Activated CD4-positive, alpha-beta T cell treated with anti-CD3 and anti-CD28 coated beads, Interleukin-2, amount 10 ng/mL, durations not matched to agents 24 days and 14 days (primary cell): ENCODE measurements at regions of chr14 and their contacts with region 1.

Region 1: DNA sequence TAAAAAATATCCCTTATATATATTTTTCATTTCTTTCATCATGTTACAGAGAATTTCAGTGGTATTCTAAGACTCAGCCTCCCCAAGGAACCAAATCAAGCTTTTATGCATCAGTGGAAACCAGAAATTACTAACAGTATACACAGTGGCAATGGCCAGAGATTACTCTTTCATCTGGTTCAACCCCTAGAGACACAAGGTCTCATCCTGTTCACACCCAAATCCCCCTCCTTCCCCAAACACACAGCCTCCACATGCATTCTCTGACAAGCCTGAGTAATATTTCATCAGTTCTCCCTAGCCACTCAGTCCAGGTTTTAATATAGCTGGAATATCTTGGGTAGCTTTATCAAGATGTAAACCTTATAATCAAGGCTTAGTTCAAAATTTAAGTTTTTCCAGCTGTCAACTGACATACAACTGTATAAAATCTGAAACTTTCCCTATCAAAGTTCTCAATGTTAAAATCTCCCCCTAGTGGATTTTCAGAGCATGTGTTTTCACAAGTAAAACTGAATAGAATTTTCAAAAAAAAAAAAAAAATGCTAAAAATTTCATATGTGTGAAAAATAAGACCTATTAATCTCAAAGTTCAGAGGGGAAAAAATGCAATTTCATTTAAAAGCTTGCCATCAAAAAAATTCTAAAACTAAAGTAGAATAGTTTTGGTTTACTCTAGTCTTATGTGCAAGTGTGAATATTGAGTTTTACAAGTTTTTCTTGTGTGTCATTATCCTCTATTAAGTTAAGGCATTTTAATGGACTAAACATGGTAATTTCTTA is 10.5 kb upstream of the SSTR1 start:
- DNase-seq: no peak
- H3K4me3 Mint-ChIP-seq: no peak overlapping the region
- H3K27ac Mint-ChIP-seq: no peak overlapping the region
- H3K4me1 Mint-ChIP-seq: no peaks in the 10 kb centered on the region
- H3K27me3 Mint-ChIP-seq: no peaks in the 10 kb centered on the region

Region 2: GRCh38 chr14:37903343-37904191 is 293.6 kb before region 1 on chr14:
- intact Hi-C with region 1: loop called (anchors 5 kb)
- DNase-seq: peak; percentile 62
- H3K4me3 Mint-ChIP-seq: no peak overlapping the region
- H3K27ac Mint-ChIP-seq: no peak overlapping the region
- H3K4me1 Mint-ChIP-seq: peaks cover 2% of the 10 kb centered on the region
- H3K27me3 Mint-ChIP-seq: peaks cover 2% of the 10 kb centered on the region

Region 3: DNA sequence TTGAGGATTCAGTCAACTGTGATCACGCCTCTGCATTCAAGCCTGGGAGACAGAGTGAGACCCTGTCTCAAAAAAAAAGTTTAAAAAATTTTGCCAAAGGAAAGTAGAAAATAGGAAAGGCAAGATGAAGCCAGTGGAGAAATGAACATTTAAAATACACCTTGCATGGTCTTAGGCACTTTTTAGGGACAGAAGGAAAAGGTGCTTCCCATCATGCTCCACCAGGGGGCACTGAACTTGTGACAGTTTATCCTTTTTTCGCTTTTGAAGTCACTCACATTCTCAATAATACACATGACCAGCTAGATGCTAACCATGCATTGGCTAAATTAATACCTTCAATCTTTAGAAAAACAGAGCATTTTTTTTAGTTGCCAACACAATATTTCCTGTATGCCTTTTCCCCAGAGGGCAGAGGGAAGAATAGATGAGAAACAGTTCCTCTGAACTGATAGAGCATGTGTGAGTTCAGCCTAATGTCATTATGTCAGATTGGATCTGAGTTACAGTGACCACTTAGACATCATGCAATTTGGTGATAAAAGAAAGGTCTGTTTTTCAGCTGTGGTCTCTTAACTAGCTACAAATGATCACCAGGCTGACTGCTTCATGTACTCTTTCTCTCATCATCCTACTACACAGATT is 211.2 kb before region 1 on chr14:
- intact Hi-C with region 1: loop called (anchors 5 kb)
- DNase-seq: peak; percentile 80
- H3K4me3 Mint-ChIP-seq: no peak overlapping the region
- H3K27ac Mint-ChIP-seq: no peak overlapping the region
- H3K4me1 Mint-ChIP-seq: no peaks in the 10 kb centered on the region
- H3K27me3 Mint-ChIP-seq: no peaks in the 10 kb centered on the region